ENCODE measurements at regions of chr18 and their contacts with region 1.

Region 1: DNA sequence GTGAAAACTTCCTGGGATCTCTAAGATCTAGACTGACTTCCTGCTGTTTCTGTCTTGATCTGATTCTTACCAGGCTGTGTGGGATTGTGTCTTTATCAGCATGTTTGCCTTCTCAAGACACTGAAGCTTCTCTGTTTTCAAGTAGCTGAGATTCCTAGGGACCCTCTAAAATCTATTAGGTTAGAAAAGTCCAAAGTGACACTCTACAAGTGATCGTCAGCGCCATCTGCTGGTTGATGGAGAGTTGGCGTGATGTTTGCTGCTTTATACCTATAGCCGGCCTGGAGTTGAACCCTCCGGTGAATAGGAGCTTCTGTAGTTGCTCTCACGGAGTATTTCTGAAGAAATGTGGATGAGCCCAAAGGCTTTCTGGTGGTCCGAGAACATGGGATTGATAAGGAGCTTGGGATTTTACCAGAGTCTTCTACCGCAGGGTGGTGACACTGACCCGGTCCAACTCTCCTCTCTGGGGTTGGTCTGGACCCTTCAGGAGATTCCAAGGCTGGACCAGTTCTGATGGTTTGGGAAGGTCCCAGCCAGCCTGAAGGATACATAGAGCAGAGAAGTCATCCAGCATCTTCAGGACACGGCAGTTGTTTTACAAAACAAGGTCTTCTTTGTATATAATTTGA is 96.0 kb upstream of the TTC39C start:
- DNase-seq: peak; percentile 50 to 89 (median 74)
- H3K4me3 ChIP-seq: no peak overlapping the region
- H3K27ac ChIP-seq: no peak overlapping the region
- H3K4me1 ChIP-seq: no peaks in the 10 kb centered on the region
- H3K27me3 ChIP-seq: no peaks in the 10 kb centered on the region
- CTCF ChIP-seq: peak; percentile 55 to 85 (median 74)
- POLR2A ChIP-seq: no peak

Region 2: GRCh38 chr18:23784832-23785245 is 133.7 kb before region 1 on chr18:
- intact Hi-C with region 1: no loop called
- DNase-seq: no peak
- H3K4me3 ChIP-seq: no peak overlapping the region
- H3K27ac ChIP-seq: no peak overlapping the region
- H3K4me1 ChIP-seq: no peaks in the 10 kb centered on the region
- H3K27me3 ChIP-seq: no peaks in the 10 kb centered on the region
- CTCF ChIP-seq: no peak
- POLR2A ChIP-seq: no peak

Region 3: GRCh38 chr18:23828426-23828825 is 90.1 kb before region 1 on chr18:
- intact Hi-C with region 1: loop called in 1 of 2 experiments (anchors 5 kb)
- DNase-seq: no peak
- H3K4me3 ChIP-seq: no peak overlapping the region
- H3K27ac ChIP-seq: no peak overlapping the region
- H3K4me1 ChIP-seq: no peaks in the 10 kb centered on the region
- H3K27me3 ChIP-seq: no peaks in the 10 kb centered on the region
- CTCF ChIP-seq: no peak
- POLR2A ChIP-seq: no peak

Region 4: GRCh38 chr18:23857756-23858155 is 60.8 kb before region 1 on chr18:
- intact Hi-C with region 1: no loop called
- DNase-seq: no peak
- H3K4me3 ChIP-seq: no peak overlapping the region
- H3K27ac ChIP-seq: no peak overlapping the region
- H3K4me1 ChIP-seq: no peaks in the 10 kb centered on the region
- H3K27me3 ChIP-seq: no peaks in the 10 kb centered on the region
- CTCF ChIP-seq: no peak
- POLR2A ChIP-seq: no peak

Region 5: GRCh38 chr18:24118750-24119577 is 200.4 kb after region 1 on chr18:
- intact Hi-C with region 1: no loop called
- DNase-seq: peak; percentile 51 to 93 (median 80)
- H3K4me3 ChIP-seq: no peak overlapping the region
- H3K27ac ChIP-seq: no peak overlapping the region
- H3K4me1 ChIP-seq: peaks cover 19 to 24% of the 10 kb centered on the region in 2 donors
- H3K27me3 ChIP-seq: no peaks in the 10 kb centered on the region
- CTCF ChIP-seq: peak; percentile 88 to 98 (median 94)
- POLR2A ChIP-seq: no peak

Region 6: GRCh38 chr18:24262087-24262486 is 343.6 kb after region 1 on chr18:
- intact Hi-C with region 1: no loop called
- DNase-seq: no peak
- H3K4me3 ChIP-seq: no peak overlapping the region
- H3K27ac ChIP-seq: no peak overlapping the region
- H3K4me1 ChIP-seq: no peaks in the 10 kb centered on the region
- H3K27me3 ChIP-seq: no peaks in the 10 kb centered on the region
- CTCF ChIP-seq: no peak
- POLR2A ChIP-seq: no peak

Measured in adrenal gland (tissue), 19 donors.